Cardiac septum (tissue), 1 donor: ENCODE measurements at regions of chr1 and their contacts with region 1.

Region 1: DNA sequence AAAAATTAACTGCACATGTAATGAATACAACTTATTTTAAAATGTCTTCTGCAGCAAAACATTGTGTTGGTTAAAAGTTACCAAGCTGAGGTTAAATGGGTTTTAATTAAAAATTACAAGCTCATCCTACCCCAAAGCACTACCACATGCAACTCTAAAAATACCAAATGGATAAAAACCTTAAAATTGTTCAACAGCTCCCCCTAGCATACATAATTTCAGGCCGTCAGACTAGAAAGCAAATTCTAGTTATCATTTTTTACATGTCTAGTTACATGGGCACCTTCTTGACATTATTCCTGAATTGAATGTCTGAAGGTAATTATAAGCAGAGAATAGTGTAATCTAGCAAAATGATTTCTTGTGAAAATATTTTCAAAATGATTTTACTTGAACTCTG is 176.5 kb downstream of the C1orf21 start:
- DNase-seq: no peak

Region 2: DNA sequence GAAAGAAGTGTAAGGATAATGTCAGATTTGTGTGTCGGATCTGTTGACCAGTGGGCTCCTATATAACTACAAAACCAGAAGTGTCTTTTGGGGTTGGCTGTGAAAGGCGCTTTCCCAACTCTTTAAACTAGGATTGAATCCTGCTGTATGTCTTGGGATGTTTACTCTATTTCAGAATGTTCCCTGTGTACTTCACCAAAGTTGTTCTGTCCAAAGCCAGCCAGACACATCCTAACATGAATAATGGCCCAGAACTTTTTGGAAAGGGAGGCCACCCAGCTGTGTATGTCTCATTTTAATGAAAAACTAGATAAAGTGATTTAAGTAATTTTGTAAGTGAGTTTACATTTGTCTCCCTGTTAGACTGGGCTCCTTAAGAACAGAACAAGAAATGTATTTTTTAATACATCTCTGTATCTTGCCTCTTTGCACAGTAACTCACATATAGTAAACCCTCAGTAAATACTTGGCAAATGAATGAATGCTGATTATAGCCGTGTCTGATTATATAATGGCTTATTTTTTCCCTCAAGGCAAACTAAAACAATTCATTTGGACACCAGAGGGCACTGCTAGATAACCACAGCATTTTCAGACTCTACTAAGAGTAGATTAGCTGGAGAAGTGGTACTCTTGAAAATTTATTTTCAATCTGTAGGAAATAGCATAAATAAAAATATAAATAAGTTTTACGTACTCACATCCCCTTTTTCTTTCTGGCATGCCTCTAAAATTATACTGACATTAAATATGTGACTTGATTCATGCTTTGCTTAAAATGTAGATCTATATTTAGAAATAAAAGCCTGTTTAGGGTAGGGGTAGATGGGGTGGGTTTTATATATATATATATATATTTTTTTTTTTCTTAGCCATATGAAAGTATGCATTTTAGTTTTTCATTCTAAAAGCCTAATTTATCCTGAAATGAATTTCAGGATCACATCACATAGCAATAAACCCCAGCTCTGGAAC is 488.0 kb before region 1 on chr1:
- intact Hi-C with region 1: loop called (anchors 10 kb)
- DNase-seq: no peak

Region 3: DNA sequence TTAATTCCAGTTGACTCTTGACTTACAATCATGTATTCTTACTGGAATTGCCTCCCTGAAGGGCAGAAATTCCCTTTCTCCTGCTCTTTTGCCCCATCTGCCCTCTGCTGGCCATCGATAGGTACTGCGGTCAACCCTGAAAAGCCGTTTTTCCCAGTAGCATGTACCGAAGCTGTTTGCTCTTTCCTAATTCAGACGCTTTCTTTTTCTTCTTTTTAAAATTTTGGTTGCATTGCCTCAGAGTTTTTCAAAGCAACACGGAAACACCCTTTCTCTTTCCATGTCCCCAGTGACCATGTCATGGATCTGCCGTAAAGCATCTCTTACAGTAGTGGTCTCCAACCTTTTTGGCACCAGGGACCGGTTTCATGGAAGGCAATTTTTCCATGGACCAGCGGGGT is 340.7 kb before region 1 on chr1:
- intact Hi-C with region 1: loop called (anchors 5 kb)
- DNase-seq: no peak

Region 4: GRCh38 chr1:184242507-184242943 is 320.8 kb before region 1 on chr1:
- intact Hi-C with region 1: loop called (anchors 5 kb)
- DNase-seq: no peak

Region 5: DNA sequence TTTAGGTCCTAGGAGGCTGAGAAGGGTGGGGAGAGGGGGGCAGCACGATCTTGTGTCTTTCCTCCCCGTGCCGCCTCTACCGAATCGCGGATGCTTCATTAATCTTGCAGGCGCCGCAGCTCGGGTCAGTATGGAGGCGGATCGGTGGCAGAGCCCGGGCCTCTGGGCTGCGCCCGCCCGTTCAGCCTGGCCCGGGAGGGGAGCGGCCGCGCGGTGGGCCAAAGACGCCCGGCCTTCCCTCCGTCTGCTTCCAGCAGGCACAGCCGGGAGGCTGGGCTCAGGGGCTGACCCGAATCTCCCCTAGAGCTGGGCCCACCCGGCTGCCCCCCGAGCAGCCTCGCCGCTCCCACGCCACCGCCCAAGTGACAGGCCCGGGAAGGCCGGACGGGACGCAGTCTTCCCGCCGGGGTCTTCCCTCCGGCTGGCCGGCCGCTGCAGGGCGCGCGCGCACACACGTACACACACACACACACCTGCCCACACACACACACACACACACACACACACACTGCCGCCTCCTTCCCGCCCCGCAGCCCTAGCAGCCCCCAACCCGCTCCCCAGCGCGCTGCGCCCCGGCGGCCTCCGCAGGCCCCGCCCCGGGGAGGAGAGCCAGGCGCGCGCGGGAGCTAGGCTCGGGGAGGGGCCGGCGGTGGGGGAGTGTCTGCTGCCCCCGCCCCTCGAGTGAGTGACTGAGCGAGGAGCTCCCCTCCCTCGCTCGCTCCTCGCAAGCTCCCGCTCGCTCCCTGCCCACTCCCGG is 176.8 kb before region 1 on chr1 and contains the start of gene C1orf21:
- intact Hi-C with region 1: loop called (anchors 2 kb)
- DNase-seq: peak; percentile 91
- total RNA-seq, gene C1orf21: 93.6 TPM

Region 6: DNA sequence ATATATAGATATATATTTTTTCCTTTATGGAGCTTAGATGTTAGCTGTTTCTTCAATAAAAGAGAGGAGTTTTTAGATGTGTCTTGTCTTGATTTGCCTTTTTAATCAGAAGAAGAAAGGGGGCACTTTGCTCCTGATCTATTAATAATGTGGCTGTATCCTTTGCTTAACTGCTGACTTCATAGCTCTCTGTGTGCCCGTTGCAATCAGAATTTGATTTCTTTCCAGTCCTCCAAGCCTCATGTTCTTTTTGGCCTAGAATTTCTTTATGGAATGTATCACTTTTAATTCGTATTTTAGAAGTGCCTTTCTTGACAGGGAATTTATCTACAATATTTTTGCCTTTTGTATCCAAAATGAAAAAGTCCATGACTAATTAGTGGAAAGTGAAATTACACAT is 91.2 kb before region 1 on chr1:
- intact Hi-C with region 1: loop called (anchors 5 kb)
- DNase-seq: no peak

Region 7: GRCh38 chr1:184664042-184664655 is 100.8 kb after region 1 on chr1:
- intact Hi-C with region 1: loop called (anchors 2 kb)
- DNase-seq: peak; percentile 84